ENCODE measurements at regions of chr19 and their contacts with region 1.

Region 1: GRCh38 chr19:57389730-57390598 is at the start of gene ZNF548:
- DNase-seq: peak; percentile 93 to 100 (median 98)
- ATAC-seq: peak; percentile 95
- H3K4me3 ChIP-seq: peak within 1 kb of the TSS; percentile 79 to 93
- H3K4me3 Mint-ChIP-seq: peak within 1 kb of the TSS; percentile 95
- H3K27ac ChIP-seq: peak within 1 kb of the TSS; percentile 92 to 98
- H3K27ac Mint-ChIP-seq: peak within 1 kb of the TSS; percentile 97
- H3K4me1 ChIP-seq: peaks cover 19% of the 10 kb centered on the region
- H3K4me1 Mint-ChIP-seq: peaks cover 43% of the 10 kb centered on the region
- H3K27me3 ChIP-seq: no peaks in the 10 kb centered on the region
- H3K27me3 Mint-ChIP-seq: no peaks in the 10 kb centered on the region
- CTCF ChIP-seq: no peak
- total RNA-seq, gene ZNF548: 75.4 to 79.1 TPM

Region 2: GRCh38 chr19:56829596-56829995 is 560.4 kb before region 1 on chr19:
- CTCF ChIA-PET with region 1: no interaction called
- POLR2A ChIA-PET with region 1: no interaction called
- intact Hi-C with region 1: no loop called
- DNase-seq: no peak
- ATAC-seq: no peak
- H3K4me3 ChIP-seq: no peak overlapping the region
- H3K4me3 Mint-ChIP-seq: no peak overlapping the region
- H3K27ac ChIP-seq: no peak overlapping the region
- H3K27ac Mint-ChIP-seq: no peak overlapping the region
- H3K4me1 ChIP-seq: no peaks in the 10 kb centered on the region
- H3K4me1 Mint-ChIP-seq: no peaks in the 10 kb centered on the region
- H3K27me3 ChIP-seq: no peaks in the 10 kb centered on the region
- H3K27me3 Mint-ChIP-seq: no peaks in the 10 kb centered on the region
- CTCF ChIP-seq: no peak

Region 3: DNA sequence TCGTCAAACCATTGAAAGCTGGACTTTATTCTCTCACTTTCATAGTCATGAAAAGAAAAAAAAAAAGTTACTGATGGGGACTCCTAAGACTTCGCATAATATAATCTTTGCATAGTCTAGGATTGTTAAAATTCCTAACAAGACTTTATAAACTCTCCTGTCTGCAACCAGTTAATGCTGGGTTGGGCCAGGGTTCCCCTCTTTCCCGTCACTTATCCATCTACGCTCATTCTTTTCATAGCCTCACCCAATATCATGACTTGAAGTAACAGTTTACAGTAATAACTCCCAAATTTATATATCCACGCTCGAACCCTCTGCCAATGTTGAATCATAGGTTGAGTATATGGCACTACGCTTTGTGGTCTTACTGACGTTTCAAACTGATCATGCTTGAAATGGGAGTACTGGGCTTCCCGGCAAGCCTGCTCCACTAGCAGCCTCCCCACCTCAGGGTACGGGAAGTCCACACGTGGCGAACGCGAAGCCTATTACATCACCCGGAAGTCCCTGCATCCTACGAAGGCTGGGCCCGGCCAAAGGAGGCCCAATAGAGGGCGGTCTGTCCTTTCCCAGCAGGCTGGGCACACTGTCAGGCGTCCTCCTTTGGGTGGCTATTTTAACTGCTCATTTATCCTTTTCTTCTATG is 110.4 kb before region 1 on chr19:
- CTCF ChIA-PET with region 1: no interaction called
- POLR2A ChIA-PET with region 1: no interaction called
- intact Hi-C with region 1: loop called (anchors 1 kb)
- DNase-seq: peak; percentile 55 to 94 (median 75)
- ATAC-seq: peak; percentile 64
- H3K4me3 ChIP-seq: peak overlapping the region; percentile 54 to 99
- H3K4me3 Mint-ChIP-seq: no peak overlapping the region
- H3K27ac ChIP-seq: peak overlapping the region; percentile 86 to 93
- H3K27ac Mint-ChIP-seq: no peak overlapping the region
- H3K4me1 ChIP-seq: peaks cover 28% of the 10 kb centered on the region
- H3K4me1 Mint-ChIP-seq: peaks cover 33% of the 10 kb centered on the region
- H3K27me3 ChIP-seq: no peaks in the 10 kb centered on the region
- H3K27me3 Mint-ChIP-seq: no peaks in the 10 kb centered on the region
- CTCF ChIP-seq: no peak

Region 4: GRCh38 chr19:57362997-57363705 is 26.8 kb before region 1 on chr19 and contains the starts of genes TRAPPC2B and ZNF547:
- CTCF ChIA-PET with region 1: interaction called, 3 read pairs
- POLR2A ChIA-PET with region 1: interaction called, 6 read pairs
- intact Hi-C with region 1: loop called (anchors 1 kb)
- DNase-seq: peak; percentile 96 to 99 (median 99)
- ATAC-seq: peak; percentile 89
- H3K4me3 ChIP-seq: peak within 1 kb of the TSS; percentile 63 to 66
- H3K4me3 Mint-ChIP-seq: peak within 1 kb of the TSS; percentile 86
- H3K27ac ChIP-seq: peak within 1 kb of the TSS; percentile 81 to 95
- H3K27ac Mint-ChIP-seq: peak within 1 kb of the TSS; percentile 98
- H3K4me1 ChIP-seq: peaks cover 12% of the 10 kb centered on the region
- H3K4me1 Mint-ChIP-seq: peaks cover 18% of the 10 kb centered on the region
- H3K27me3 ChIP-seq: no peaks in the 10 kb centered on the region
- H3K27me3 Mint-ChIP-seq: no peaks in the 10 kb centered on the region
- CTCF ChIP-seq: no peak
- total RNA-seq, gene TRAPPC2B: 8.6 to 9.9 TPM
- total RNA-seq, gene ZNF547: 0.72 to 0.81 TPM

Region 5: DNA sequence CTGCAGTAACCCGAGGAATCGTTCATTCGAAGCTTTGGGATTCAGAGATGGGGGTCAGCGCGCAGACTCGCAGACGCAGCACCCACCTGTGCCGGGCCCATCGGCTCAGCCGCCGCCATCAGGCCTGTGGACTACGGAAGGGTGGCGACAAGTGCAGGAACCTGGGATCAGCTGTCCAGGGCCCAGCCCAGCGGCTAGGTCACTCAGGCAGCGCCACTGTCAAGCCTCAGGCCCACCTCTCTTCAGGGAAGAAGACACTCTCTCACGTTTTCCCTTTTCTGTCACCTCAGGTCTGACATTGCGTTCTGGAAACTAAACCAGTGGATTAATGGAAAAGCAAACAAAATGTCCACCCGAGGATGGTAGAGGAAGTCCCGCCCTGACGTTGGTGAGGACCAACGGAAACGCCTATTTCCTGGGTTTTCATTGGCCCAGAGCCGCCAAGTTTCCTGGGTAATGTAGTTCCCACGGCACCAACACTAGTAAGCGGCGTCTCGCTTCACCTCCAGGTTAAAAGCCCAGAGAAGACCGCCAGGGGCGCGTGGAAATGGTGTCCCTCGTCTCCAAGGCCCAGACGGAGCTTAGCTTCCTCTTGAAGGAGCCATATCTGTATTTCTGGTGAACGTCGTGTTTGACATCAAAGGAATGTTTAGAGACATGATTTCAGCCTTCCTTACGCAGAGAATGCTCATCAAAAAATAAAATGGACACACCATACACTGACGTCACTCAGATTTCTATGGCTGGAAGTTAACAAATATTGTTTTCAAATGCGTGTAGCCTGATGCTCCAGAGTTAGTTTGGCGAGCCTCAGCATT is 87.4 kb after region 1 on chr19 and contains the start of gene ZNF772:
- CTCF ChIA-PET with region 1: no interaction called
- POLR2A ChIA-PET with region 1: no interaction called
- intact Hi-C with region 1: loop called in 1 of 2 experiments (anchors 1 kb)
- DNase-seq: peak; percentile 76 to 95 (median 88)
- ATAC-seq: peak; percentile 99
- H3K4me3 ChIP-seq: peak within 1 kb of the TSS; percentile 78 to 86
- H3K4me3 Mint-ChIP-seq: peak within 1 kb of the TSS; percentile 88
- H3K27ac ChIP-seq: peak within 1 kb of the TSS; percentile 47 to 83
- H3K27ac Mint-ChIP-seq: peak within 1 kb of the TSS; percentile 92
- H3K4me1 ChIP-seq: peaks cover 8% of the 10 kb centered on the region
- H3K4me1 Mint-ChIP-seq: peaks cover 14% of the 10 kb centered on the region
- H3K27me3 ChIP-seq: peaks cover 0 to 2% of the 10 kb centered on the region in 2 experiments
- H3K27me3 Mint-ChIP-seq: peaks cover 2% of the 10 kb centered on the region
- CTCF ChIP-seq: peak; percentile 65
- total RNA-seq, gene ZNF772: 0.41 to 0.97 TPM

Region 6: GRCh38 chr19:57682226-57682766 is 292.3 kb after region 1 on chr19:
- CTCF ChIA-PET with region 1: interaction called, 3 read pairs
- POLR2A ChIA-PET with region 1: no interaction called
- intact Hi-C with region 1: loop called in 1 of 2 experiments (anchors 5 kb)
- DNase-seq: no peak
- ATAC-seq: no peak
- H3K4me3 ChIP-seq: peak overlapping the region; percentile 91 to 94
- H3K4me3 Mint-ChIP-seq: peak overlapping the region; percentile 98
- H3K27ac ChIP-seq: peak overlapping the region; percentile 69 to 71
- H3K27ac Mint-ChIP-seq: peak overlapping the region; percentile 97
- H3K4me1 ChIP-seq: peaks cover 19% of the 10 kb centered on the region
- H3K4me1 Mint-ChIP-seq: peaks cover 36% of the 10 kb centered on the region
- H3K27me3 ChIP-seq: peaks cover 0 to 2% of the 10 kb centered on the region in 2 experiments
- H3K27me3 Mint-ChIP-seq: peaks cover 7% of the 10 kb centered on the region
- CTCF ChIP-seq: no peak

Region 7: GRCh38 chr19:57947208-57948134 is 557.5 kb after region 1 on chr19 and contains the start of gene ZNF256:
- CTCF ChIA-PET with region 1: no interaction called
- POLR2A ChIA-PET with region 1: no interaction called
- intact Hi-C with region 1: loop called in 1 of 2 experiments (anchors 1 kb)
- DNase-seq: peak; percentile 72 to 92 (median 86)
- ATAC-seq: peak; percentile 91
- H3K4me3 ChIP-seq: peak within 1 kb of the TSS; percentile 93 to 97
- H3K4me3 Mint-ChIP-seq: peak within 1 kb of the TSS; percentile 93
- H3K27ac ChIP-seq: peak within 1 kb of the TSS; percentile 76 to 90
- H3K27ac Mint-ChIP-seq: peak within 1 kb of the TSS; percentile 95
- H3K4me1 ChIP-seq: peaks cover 16% of the 10 kb centered on the region
- H3K4me1 Mint-ChIP-seq: peaks cover 20% of the 10 kb centered on the region
- H3K27me3 ChIP-seq: no peaks in the 10 kb centered on the region
- H3K27me3 Mint-ChIP-seq: no peaks in the 10 kb centered on the region
- CTCF ChIP-seq: peak; percentile 44
- total RNA-seq, gene ZNF256: 18.3 to 21.0 TPM

Region 8: DNA sequence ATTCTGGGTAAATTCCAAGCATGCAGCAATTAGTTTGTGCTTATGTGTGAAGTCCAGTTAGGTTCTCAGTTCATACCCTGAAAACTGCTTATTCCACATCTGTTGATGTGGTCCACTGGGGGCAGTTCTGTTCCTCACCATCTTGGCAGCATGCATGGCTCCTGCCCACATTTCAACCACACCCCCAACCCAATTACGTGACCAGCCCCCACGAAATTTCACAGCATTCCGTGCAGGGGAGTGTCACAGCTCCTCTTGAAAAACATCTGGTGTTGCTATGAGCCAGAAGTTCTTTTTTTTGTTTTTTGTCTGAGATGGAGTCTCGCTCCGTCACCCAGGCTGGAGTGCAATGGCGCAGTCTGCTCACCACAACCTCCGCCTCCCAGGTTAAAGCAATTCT is 906.1 kb after region 1 on chr19:
- CTCF ChIA-PET with region 1: no interaction called
- POLR2A ChIA-PET with region 1: no interaction called
- intact Hi-C with region 1: no loop called
- DNase-seq: no peak
- ATAC-seq: no peak
- H3K4me3 ChIP-seq: no peak overlapping the region
- H3K4me3 Mint-ChIP-seq: no peak overlapping the region
- H3K27ac ChIP-seq: no peak overlapping the region
- H3K27ac Mint-ChIP-seq: no peak overlapping the region
- H3K4me1 ChIP-seq: no peaks in the 10 kb centered on the region
- H3K4me1 Mint-ChIP-seq: no peaks in the 10 kb centered on the region
- H3K27me3 ChIP-seq: no peaks in the 10 kb centered on the region
- H3K27me3 Mint-ChIP-seq: no peaks in the 10 kb centered on the region
- CTCF ChIP-seq: no peak

Measured in CD8-positive, alpha-beta T cell (primary cell).